CD4-positive, alpha-beta memory T cell (primary cell): ENCODE measurements at regions of chr10 and their contacts with region 1.

Region 1: GRCh38 chr10:5732141-5732540 is 47.5 kb downstream of the TASOR2 start:
- DNase-seq: no peak
- H3K4me3 ChIP-seq: no peak overlapping the region
- H3K4me3 Mint-ChIP-seq: no peak overlapping the region
- H3K27ac ChIP-seq: no peak overlapping the region
- H3K27ac Mint-ChIP-seq: peak overlapping the region in 5 of 7 donors; percentile 6 to 59 (median 18)
- H3K4me1 ChIP-seq: no peaks in the 10 kb centered on the region
- H3K4me1 Mint-ChIP-seq: peaks cover 9 to 21% (median 13%) of the 10 kb centered on the region in 4 donors
- H3K27me3 ChIP-seq: no peaks in the 10 kb centered on the region
- H3K27me3 Mint-ChIP-seq: no peaks in the 10 kb centered on the region

Region 2: DNA sequence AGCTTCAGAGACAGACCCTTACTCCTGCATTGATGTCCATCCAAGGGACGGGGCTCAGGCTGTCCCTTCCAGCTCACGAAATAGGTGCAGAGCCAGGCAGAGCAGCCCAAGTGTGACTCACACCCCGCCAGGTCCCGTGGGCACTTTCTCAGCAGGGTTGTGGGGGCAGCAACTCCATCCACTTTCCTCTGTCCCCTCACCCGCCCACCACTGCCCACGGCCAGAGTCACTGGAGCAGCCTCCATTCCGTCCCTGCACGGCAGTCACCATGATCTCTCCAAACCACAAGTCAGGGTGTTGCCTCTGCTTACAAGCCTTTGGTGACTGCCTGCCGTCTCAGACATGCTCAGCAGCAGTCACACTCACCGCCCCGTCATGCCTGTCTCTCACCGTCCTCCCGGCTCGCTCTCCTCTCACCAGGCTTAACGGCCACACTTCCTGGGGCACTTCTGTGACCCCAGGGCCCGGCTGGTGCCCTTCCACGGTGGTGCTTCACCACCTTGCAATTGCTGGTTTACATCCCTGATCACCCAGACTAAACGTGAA is 168.1 kb before region 1 on chr10:
- CTCF ChIA-PET with region 1: no interaction called
- POLR2A ChIA-PET with region 1: no interaction called
- intact Hi-C with region 1: no loop called
- DNase-seq: peak; percentile 52 to 67 (median 58)
- H3K4me3 ChIP-seq: peak overlapping the region; percentile 19 to 67
- H3K4me3 Mint-ChIP-seq: peak overlapping the region; percentile 81 to 95 (median 86)
- H3K27ac ChIP-seq: peak overlapping the region; percentile 61
- H3K27ac Mint-ChIP-seq: peak overlapping the region; percentile 96 to 99 (median 98)
- H3K4me1 ChIP-seq: peaks cover 33% of the 10 kb centered on the region
- H3K4me1 Mint-ChIP-seq: peaks cover 29 to 49% (median 35%) of the 10 kb centered on the region in 4 donors
- H3K27me3 ChIP-seq: no peaks in the 10 kb centered on the region
- H3K27me3 Mint-ChIP-seq: peaks cover 0 to 3% of the 10 kb centered on the region in 2 donors

Region 3: GRCh38 chr10:5692461-5693358 is 39.4 kb before region 1 on chr10:
- CTCF ChIA-PET with region 1: no interaction called
- POLR2A ChIA-PET with region 1: no interaction called
- intact Hi-C with region 1: loop called (anchors 5 kb)
- DNase-seq: peak; percentile 47 to 80 (median 53)
- H3K4me3 ChIP-seq: peak overlapping the region in 1 of 2 donors; percentile 51
- H3K4me3 Mint-ChIP-seq: peak overlapping the region; percentile 63 to 91 (median 76)
- H3K27ac ChIP-seq: peak overlapping the region; percentile 22
- H3K27ac Mint-ChIP-seq: peak overlapping the region; percentile 9 to 77 (median 64)
- H3K4me1 ChIP-seq: peaks cover 80% of the 10 kb centered on the region
- H3K4me1 Mint-ChIP-seq: peaks cover 45 to 90% (median 68%) of the 10 kb centered on the region in 4 donors
- H3K27me3 ChIP-seq: no peaks in the 10 kb centered on the region
- H3K27me3 Mint-ChIP-seq: no peaks in the 10 kb centered on the region

Region 4: DNA sequence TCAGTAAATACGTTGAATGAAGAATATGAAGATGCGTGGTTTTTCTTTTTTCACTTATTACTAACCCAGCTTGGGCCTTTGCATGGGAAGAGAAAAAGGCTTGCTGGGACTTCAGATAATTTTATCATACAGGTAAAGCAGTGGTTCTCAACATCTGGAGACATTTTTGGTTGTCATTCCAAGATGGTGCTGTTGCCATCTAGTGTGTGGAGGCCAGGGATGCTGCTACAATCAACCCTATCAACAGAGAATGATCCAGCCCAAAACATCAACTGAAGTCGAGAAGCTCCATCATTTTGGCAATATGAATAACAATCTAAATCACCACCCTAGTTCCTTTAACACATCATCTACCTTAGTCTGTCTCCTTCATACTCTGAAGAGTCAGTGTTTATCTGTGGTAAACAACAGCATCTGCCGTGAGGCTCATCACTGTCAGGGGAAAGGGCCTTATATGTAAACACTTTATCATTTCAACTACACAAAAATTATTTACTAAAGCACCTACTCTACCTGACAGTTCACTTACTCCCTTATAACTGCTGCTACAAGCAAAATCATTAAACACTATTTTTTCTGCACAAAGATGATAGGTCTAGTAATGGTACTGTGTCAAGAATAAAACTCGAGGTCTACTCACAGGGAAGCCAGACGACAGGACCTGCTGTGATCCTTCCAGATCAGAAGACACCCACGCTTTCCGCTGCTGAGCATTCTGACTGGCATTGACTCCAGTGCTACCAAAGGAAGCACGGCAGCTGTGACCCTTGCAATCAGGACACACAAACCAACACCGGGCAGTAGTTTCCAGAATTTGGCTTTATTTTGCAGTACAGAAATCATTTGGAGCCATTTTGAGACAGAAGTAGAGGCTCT is 32.5 kb after region 1 on chr10:
- CTCF ChIA-PET with region 1: no interaction called
- POLR2A ChIA-PET with region 1: no interaction called
- intact Hi-C with region 1: no loop called
- DNase-seq: no peak
- H3K4me3 ChIP-seq: no peak overlapping the region
- H3K4me3 Mint-ChIP-seq: no peak overlapping the region
- H3K27ac ChIP-seq: no peak overlapping the region
- H3K27ac Mint-ChIP-seq: peak overlapping the region; percentile 5 to 81 (median 63)
- H3K4me1 ChIP-seq: no peaks in the 10 kb centered on the region
- H3K4me1 Mint-ChIP-seq: peaks cover 0 to 13% (median 5%) of the 10 kb centered on the region in 4 donors
- H3K27me3 ChIP-seq: no peaks in the 10 kb centered on the region
- H3K27me3 Mint-ChIP-seq: no peaks in the 10 kb centered on the region

Region 5: DNA sequence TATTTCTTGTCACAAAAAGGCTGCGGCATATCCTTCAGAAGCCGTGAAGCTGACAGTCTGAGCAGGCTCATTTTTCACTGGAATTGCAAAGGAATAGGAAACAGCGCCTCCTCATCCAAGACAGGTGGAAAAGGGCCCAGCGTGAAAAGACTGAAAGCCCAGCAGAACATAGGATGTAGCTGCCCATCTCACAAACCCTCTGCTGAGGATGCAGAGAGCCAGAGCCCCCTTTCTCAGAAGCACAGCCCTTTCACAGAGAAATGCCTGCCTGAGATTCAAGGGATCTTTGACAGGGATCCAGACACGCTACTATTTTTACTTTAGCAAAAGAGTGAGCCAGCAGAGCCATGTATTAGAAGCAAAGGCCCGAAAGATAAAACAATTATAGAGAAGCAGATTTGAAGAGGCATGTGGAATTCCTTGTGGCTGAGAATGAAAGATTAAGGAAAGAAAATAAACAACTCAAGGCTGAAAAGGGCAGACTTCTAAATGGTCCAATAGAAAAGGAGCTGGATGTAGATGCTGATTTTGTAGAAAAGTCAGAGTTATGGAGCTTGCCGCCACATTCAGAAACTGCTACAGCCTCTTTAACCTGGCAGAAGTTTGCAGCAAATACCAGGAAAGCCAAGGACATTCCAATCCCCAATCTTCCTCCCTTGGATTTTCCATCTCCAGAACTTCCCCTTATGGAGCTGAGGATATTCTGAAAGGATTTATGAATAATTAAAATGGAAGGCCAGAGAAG is 44.2 kb after region 1 on chr10:
- CTCF ChIA-PET with region 1: no interaction called
- POLR2A ChIA-PET with region 1: no interaction called
- intact Hi-C with region 1: no loop called
- DNase-seq: no peak
- H3K4me3 ChIP-seq: peak overlapping the region in 1 of 2 donors; percentile 23
- H3K4me3 Mint-ChIP-seq: peak overlapping the region; percentile 56 to 81 (median 76)
- H3K27ac ChIP-seq: peak overlapping the region; percentile 58
- H3K27ac Mint-ChIP-seq: peak overlapping the region; percentile 88 to 97 (median 94)
- H3K4me1 ChIP-seq: peaks cover 26% of the 10 kb centered on the region
- H3K4me1 Mint-ChIP-seq: peaks cover 35 to 65% (median 46%) of the 10 kb centered on the region in 4 donors
- H3K27me3 ChIP-seq: no peaks in the 10 kb centered on the region
- H3K27me3 Mint-ChIP-seq: no peaks in the 10 kb centered on the region